Prostate gland (tissue), 2 donors: ENCODE measurements at regions of chr7 and their contacts with region 1.

Region 1: DNA sequence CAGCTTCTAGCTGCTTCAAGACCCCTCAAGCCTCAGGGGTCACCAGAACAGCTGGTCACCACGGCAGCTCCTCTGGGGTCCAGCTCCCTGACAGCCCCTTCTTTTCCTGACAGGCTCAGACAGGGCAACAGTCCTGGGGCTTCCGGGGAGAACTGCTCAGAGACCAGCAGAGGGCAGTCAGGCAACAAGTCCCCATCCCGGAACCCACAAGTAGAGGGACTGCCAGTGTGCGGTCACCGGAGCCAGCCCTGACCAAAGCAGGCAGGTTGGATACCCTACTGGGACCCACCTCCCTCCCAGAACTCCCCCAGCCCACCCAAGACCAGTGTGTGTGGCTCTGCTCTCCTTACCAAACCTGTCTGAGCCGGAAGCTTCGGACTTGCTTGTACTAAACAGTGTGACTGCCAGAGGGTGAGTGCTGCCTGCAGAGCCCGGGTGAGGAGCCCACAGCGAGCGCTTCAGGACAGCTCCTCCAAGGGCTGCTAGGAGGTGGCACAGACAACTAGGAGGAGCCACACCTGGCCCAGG is 40.3 kb downstream of the YKT6 start:
- DNase-seq: peak; percentile 76
- H3K4me3 ChIP-seq: peak overlapping the region in 1 of 2 donors; percentile 1
- H3K27ac ChIP-seq: peak overlapping the region in 1 of 2 donors; percentile 21
- H3K4me1 ChIP-seq: no peaks in the 10 kb centered on the region
- H3K27me3 ChIP-seq: no peaks in the 10 kb centered on the region
- CTCF ChIP-seq: peak; percentile 16 to 80 (median 70)
- POLR2A ChIP-seq: no peak

Region 2: GRCh38 chr7:43977525-43977924 is 263.5 kb before region 1 on chr7:
- intact Hi-C with region 1: no loop called
- DNase-seq: no peak
- H3K4me3 ChIP-seq: no peak overlapping the region
- H3K27ac ChIP-seq: no peak overlapping the region
- H3K4me1 ChIP-seq: no peaks in the 10 kb centered on the region
- H3K27me3 ChIP-seq: no peaks in the 10 kb centered on the region
- CTCF ChIP-seq: no peak
- POLR2A ChIP-seq: no peak

Region 3: DNA sequence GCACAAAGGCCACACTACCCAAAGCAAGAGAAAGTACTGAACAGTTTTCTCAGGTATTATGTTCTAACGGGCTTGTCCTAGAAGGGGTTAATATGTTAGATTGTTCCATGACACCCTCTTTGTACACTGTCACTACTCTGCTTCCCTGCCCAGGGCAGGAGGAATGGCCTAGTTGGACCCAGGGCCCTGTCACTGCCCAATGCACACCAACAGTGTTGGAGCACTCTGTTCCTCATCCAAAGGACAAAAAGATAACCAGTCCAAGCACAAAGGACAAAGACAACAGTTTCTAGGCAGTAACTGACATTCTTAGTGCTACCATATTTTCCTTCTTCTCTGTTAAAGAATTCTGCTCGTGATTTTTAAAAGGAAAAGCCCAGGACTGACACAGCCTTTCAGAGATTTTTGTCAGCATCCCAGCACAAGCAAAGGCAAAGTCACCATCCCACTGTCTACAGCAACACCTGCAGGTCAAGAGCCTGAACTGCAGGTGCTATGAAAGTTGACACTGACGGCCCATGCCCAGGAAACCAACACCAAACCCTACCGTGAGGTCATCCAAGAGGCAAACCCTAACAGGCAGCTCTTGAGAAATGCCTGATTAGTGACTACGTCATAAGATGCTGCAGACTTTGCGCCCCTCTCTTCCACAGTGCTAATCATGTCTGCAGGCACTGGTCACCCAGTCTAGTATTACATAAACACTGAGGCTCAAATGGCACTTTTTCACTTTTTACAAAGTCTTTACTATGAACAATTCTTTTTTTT is 236.2 kb after region 1 on chr7:
- intact Hi-C with region 1: loop called (anchors 2 kb)
- DNase-seq: peak; percentile 27
- H3K4me3 ChIP-seq: no peak overlapping the region
- H3K27ac ChIP-seq: no peak overlapping the region
- H3K4me1 ChIP-seq: no peaks in the 10 kb centered on the region
- H3K27me3 ChIP-seq: no peaks in the 10 kb centered on the region
- CTCF ChIP-seq: peak; percentile 65 to 89 (median 76)
- POLR2A ChIP-seq: no peak

Region 4: GRCh38 chr7:44565097-44565794 is 324.2 kb after region 1 on chr7:
- intact Hi-C with region 1: loop called (anchors 5 kb)
- DNase-seq: peak; percentile 56
- H3K4me3 ChIP-seq: no peak overlapping the region
- H3K27ac ChIP-seq: no peak overlapping the region
- H3K4me1 ChIP-seq: no peaks in the 10 kb centered on the region
- H3K27me3 ChIP-seq: no peaks in the 10 kb centered on the region
- CTCF ChIP-seq: peak; percentile 90 to 98 (median 94)
- POLR2A ChIP-seq: no peak